SK-N-SH (cell line): ENCODE measurements at regions of chr1 and their contacts with region 1.

Region 1: DNA sequence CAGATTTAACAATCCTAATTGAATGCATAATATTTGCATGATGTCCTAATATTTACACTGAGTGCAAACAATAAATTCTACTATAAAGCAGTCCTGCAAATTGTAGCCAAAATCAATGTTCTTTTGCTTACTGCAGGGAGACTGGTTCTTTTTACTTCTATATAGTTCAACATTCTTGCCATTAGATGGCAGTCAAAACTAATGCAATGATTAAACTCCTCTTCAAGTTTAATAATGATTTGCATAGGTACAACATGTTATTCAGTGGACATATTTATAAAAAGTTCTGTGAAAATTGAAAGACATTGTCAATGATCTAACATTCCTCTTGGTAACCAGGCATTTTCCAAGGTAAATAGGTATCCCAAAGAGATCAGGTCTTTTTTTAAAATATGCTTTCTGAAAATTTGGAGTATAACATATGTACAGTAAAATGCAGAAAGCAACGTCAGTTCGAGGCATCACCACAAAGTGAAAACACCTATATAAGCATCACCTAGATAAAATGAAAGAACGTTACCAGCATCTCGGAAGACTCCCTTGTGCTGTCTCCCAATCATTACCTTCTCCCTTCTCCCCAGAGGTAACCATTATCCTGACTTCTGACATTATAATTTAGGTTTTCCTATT is 9.8 kb upstream of the FNBP1L start:
- DNase-seq: peak; percentile 63
- H3K4me3 ChIP-seq: no peak overlapping the region; a peak in 1 of 4 replicates
- H3K27ac ChIP-seq: no peak overlapping the region
- H3K4me1 ChIP-seq: peaks cover 0 to 6% of the 10 kb centered on the region in 2 experiments; a peak in 2 of 4 replicates
- H3K27me3 ChIP-seq: no peaks in the 10 kb centered on the region
- CTCF ChIP-seq: peak; percentile 82
- EP300 ChIP-seq: no peak
- RAD21 ChIP-seq: peak; percentile 88

Region 2: DNA sequence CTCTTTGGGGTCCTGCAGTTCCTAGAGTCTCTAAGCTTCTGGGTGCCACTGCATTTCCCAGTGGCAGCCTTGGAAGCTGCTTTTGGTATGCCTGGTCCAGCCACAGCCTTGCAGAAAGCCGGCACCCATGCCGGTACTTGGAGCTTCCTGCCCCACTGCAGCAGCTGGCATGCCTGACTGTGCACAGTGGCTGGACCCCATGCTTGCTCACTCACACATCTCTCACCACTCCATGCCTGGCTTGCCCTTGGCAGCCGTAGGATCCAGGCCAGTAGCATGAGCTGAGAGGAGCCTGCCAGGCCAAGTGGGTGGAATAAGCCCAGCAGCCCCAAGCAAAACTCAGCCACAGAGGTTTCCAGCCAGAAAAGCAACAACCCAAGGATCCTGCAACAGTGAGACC is 10.4 kb before region 1 on chr1:
- CTCF ChIA-PET with region 1: interaction called, 13 read pairs
- POLR2A ChIA-PET with region 1: no interaction called
- DNase-seq: no peak
- H3K4me3 ChIP-seq: no peak overlapping the region
- H3K27ac ChIP-seq: no peak overlapping the region
- H3K4me1 ChIP-seq: no peaks in the 10 kb centered on the region
- H3K27me3 ChIP-seq: no peaks in the 10 kb centered on the region
- CTCF ChIP-seq: no peak
- EP300 ChIP-seq: no peak
- RAD21 ChIP-seq: no peak

Region 3: DNA sequence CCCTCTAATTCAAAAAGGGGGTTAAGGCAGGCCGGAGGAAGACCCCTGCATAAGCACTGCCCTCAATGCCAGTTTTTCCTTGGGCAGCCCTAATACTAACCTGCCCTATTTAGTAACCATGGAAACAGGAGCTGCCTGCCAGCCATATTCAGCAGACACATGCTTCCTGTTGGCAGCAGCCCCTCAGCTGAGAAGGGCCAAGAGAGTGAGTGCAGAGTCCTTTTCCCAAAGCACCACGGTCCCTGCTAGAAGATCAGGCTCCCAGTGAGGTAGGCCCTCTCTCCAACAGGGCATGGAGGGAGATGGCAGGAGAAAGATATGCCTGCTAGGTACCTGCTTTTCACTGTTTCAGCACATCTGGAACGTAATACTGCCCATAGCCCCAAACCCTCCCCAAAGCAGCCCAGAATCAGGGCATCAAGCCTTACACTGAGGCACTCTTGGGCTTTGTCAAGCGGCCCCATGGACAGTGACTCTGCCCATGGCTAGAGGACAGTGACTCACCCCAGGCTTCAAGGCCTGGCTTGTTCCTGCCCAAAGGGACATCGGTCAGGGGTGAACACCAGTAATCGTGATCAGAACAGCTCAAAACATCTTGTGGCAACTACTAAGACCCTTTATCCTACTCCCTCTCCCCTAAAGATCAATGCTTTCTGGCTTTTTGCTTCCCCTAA is 179.0 kb after region 1 on chr1:
- CTCF ChIA-PET with region 1: interaction called, 16 read pairs
- POLR2A ChIA-PET with region 1: no interaction called
- DNase-seq: peak; percentile 68
- H3K4me3 ChIP-seq: 0 out of 4 replicates have a peak overlapping the region, but pooled peaks of 1 of the 2 experiments have one; percentile 4
- H3K27ac ChIP-seq: peak overlapping the region; percentile 97 to 98
- H3K4me1 ChIP-seq: peaks cover 80 to 84% of the 10 kb centered on the region in 2 experiments
- H3K27me3 ChIP-seq: no peaks in the 10 kb centered on the region
- CTCF ChIP-seq: no peak
- EP300 ChIP-seq: no peak
- RAD21 ChIP-seq: no peak; the same call in 1 of the 2 replicates